ENCODE measurements at regions of chr2 and their contacts with region 1.

Region 1: GRCh38 chr2:42974721-42975717 is 182.6 kb upstream of the HAAO start:
- DNase-seq: peak; percentile 95 to 98
- H3K4me3 ChIP-seq: peak overlapping the region; percentile 7; the same call in 1 of the 2 replicates
- H3K4me3 Mint-ChIP-seq: peak overlapping the region; percentile 63
- H3K27ac Mint-ChIP-seq: peak overlapping the region; percentile 84
- H3K4me1 ChIP-seq: peaks cover 83% of the 10 kb centered on the region
- H3K4me1 Mint-ChIP-seq: peaks cover 73% of the 10 kb centered on the region
- H3K27me3 ChIP-seq: no peaks in the 10 kb centered on the region
- H3K27me3 Mint-ChIP-seq: no peaks in the 10 kb centered on the region
- CTCF ChIP-seq: peak; percentile 96 to 97

Region 2: GRCh38 chr2:42810121-42810970 is 164.7 kb before region 1 on chr2:
- CTCF ChIA-PET with region 1: interaction called, 10 read pairs
- POLR2A ChIA-PET with region 1: interaction called, 4 read pairs
- intact Hi-C with region 1: no loop called
- DNase-seq: peak; percentile 95 to 97
- H3K4me3 ChIP-seq: peak overlapping the region; percentile 80
- H3K4me3 Mint-ChIP-seq: peak overlapping the region; percentile 96
- H3K27ac Mint-ChIP-seq: peak overlapping the region; percentile 94
- H3K4me1 ChIP-seq: peaks cover 5% of the 10 kb centered on the region; the same call in 1 of the 2 replicates
- H3K4me1 Mint-ChIP-seq: peaks cover 14% of the 10 kb centered on the region
- H3K27me3 ChIP-seq: no peaks in the 10 kb centered on the region
- H3K27me3 Mint-ChIP-seq: no peaks in the 10 kb centered on the region
- CTCF ChIP-seq: peak in 1 of 2 experiments; percentile 3

Region 3: DNA sequence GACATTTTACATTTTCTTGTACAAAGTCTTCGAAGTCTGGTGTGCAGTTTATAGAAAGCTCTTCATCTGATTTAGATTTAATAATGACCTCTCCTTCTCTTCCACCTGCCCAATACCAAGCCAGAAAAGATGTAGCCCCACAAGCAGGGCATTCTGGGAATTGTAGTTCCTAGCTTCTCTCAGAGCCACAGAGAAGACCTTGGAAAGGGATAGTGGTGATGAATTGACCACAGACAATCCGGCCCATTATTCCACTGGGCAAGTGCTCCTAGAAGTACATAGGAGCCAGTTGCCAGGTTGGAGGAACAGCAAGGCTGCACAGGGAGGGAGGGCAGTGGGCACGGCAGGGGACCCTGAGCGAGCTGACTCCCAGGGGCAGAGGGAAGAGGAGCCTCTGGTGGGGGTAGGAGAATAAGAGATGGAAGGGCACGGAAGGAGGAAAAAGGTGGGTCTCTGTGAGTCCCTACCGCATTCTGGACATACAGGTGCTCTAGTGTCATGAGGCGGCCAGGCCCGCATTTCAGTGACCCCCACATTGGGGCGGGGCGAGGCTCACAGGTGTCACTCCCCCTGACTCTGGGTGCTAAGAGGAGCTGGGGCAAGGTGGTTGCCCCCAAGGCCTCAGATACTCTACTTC is 30.1 kb before region 1 on chr2:
- CTCF ChIA-PET with region 1: interaction called, 7 read pairs
- POLR2A ChIA-PET with region 1: interaction called, 3 read pairs
- intact Hi-C with region 1: loop called (anchors 1 kb)
- DNase-seq: no peak
- H3K4me3 ChIP-seq: no peak overlapping the region
- H3K4me3 Mint-ChIP-seq: no peak overlapping the region
- H3K27ac Mint-ChIP-seq: no peak overlapping the region
- H3K4me1 ChIP-seq: peaks cover 52% of the 10 kb centered on the region
- H3K4me1 Mint-ChIP-seq: peaks cover 36% of the 10 kb centered on the region
- H3K27me3 ChIP-seq: no peaks in the 10 kb centered on the region
- H3K27me3 Mint-ChIP-seq: no peaks in the 10 kb centered on the region
- CTCF ChIP-seq: no peak

Region 4: DNA sequence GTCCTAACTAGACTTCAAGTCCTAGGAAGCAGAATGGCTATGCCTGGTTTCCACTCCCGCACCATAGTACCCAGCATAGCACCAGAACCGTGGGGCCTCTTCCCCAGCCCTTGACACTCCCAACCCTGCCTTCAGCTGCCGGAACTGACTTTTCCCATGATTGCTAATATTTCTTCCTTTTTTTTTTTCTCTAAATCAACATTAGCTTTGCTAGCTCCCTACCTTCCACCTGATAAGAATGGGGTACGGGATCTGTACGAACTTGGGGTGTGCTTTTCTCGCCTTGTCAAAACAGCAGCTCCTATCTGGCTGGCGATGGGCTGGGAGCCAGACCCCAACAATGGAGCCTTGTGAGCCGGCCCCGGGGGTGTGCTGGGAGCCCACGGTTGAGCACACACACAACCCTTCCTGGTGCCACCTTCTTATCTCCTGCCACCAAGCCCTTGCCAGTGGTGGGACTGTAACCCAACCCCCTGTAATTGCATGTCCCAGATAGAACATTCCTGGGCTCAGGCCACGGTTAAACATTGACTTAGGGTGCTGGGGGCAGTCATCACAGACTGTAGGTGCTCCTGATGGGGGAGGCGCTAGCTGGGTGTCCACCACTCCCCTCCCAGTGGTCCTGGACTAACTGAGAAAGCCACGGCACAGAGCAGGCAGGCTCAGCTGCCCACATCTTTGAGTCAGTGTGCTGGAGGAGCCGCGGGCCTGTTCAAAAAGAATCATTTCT is 30.4 kb after region 1 on chr2:
- CTCF ChIA-PET with region 1: interaction called, 6 read pairs
- POLR2A ChIA-PET with region 1: interaction called, 7 read pairs
- intact Hi-C with region 1: loop called (anchors 1 kb)
- DNase-seq: peak; percentile 75 to 93
- H3K4me3 ChIP-seq: peak overlapping the region; percentile 15; the same call in 1 of the 2 replicates
- H3K4me3 Mint-ChIP-seq: peak overlapping the region; percentile 14
- H3K27ac Mint-ChIP-seq: peak overlapping the region; percentile 84
- H3K4me1 ChIP-seq: peaks cover 43% of the 10 kb centered on the region
- H3K4me1 Mint-ChIP-seq: peaks cover 40% of the 10 kb centered on the region
- H3K27me3 ChIP-seq: no peaks in the 10 kb centered on the region
- H3K27me3 Mint-ChIP-seq: no peaks in the 10 kb centered on the region
- CTCF ChIP-seq: no peak

Region 5: DNA sequence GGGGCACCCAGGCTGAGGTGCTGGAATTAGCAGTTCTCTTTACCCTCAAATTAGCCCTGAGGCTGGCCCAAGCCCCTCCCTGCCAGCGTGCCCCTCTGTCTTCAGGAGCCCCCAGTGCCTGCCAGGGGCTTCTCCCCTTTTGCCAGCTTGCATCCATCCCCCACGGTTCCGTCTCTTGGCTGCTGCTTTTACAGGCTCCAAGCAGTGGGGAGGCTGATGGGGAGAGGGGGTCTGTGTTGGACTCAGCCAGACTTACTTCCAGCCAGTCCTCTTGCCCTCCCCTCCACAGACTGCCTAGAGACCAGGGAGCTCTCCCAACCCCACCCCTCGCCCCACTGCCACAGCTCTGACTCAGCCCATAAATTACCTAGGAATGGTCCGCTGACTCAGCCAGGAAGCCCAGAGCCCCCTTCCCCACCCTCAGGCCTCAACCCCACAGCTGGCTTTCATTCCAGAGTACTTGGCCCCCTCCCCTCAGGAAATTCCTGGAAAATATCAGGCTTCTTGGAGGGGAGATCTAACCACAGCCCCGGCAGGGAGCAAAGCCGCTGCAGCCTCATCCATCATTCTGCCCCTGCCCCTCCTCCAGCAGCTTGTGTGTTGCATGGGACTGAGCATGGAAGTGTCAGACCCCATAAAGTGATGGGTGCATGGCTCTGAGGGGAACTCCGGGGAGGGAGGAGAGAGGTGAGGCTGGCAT is 66.8 kb after region 1 on chr2:
- CTCF ChIA-PET with region 1: interaction called, 4 read pairs
- POLR2A ChIA-PET with region 1: interaction called, 6 read pairs
- intact Hi-C with region 1: loop called (anchors 1 kb)
- DNase-seq: peak; percentile 79 to 93
- H3K4me3 ChIP-seq: no peak overlapping the region
- H3K4me3 Mint-ChIP-seq: peak overlapping the region; percentile 35
- H3K27ac Mint-ChIP-seq: peak overlapping the region; percentile 99
- H3K4me1 ChIP-seq: peaks cover 89% of the 10 kb centered on the region
- H3K4me1 Mint-ChIP-seq: peaks cover 48% of the 10 kb centered on the region
- H3K27me3 ChIP-seq: no peaks in the 10 kb centered on the region
- H3K27me3 Mint-ChIP-seq: no peaks in the 10 kb centered on the region
- CTCF ChIP-seq: no peak

Region 6: GRCh38 chr2:43194121-43194869 is 219.3 kb after region 1 on chr2:
- CTCF ChIA-PET with region 1: interaction called, 5 read pairs
- POLR2A ChIA-PET with region 1: interaction called, 7 read pairs
- intact Hi-C with region 1: loop called (anchors 1 kb)
- DNase-seq: peak; percentile 97 to 98
- H3K4me3 ChIP-seq: 0 out of 2 replicates have a peak overlapping the region, but pooled peaks have one; percentile 0
- H3K4me3 Mint-ChIP-seq: peak overlapping the region; percentile 67
- H3K27ac Mint-ChIP-seq: peak overlapping the region; percentile 91
- H3K4me1 ChIP-seq: peaks cover 86% of the 10 kb centered on the region
- H3K4me1 Mint-ChIP-seq: peaks cover 60% of the 10 kb centered on the region
- H3K27me3 ChIP-seq: no peaks in the 10 kb centered on the region
- H3K27me3 Mint-ChIP-seq: no peaks in the 10 kb centered on the region
- CTCF ChIP-seq: no peak

Region 7: GRCh38 chr2:43424262-43425207 is 449.5 kb after region 1 on chr2:
- CTCF ChIA-PET with region 1: no interaction called
- POLR2A ChIA-PET with region 1: no interaction called
- intact Hi-C with region 1: loop called (anchors 1 kb)
- DNase-seq: peak in 1 of 2 experiments; percentile 38
- H3K4me3 ChIP-seq: no peak overlapping the region
- H3K4me3 Mint-ChIP-seq: peak overlapping the region; percentile 39
- H3K27ac Mint-ChIP-seq: peak overlapping the region; percentile 66
- H3K4me1 ChIP-seq: peaks cover 80% of the 10 kb centered on the region
- H3K4me1 Mint-ChIP-seq: peaks cover 46% of the 10 kb centered on the region
- H3K27me3 ChIP-seq: no peaks in the 10 kb centered on the region
- H3K27me3 Mint-ChIP-seq: no peaks in the 10 kb centered on the region
- CTCF ChIP-seq: no peak

Region 8: GRCh38 chr2:43853141-43854081 is 878.4 kb after region 1 on chr2:
- CTCF ChIA-PET with region 1: no interaction called
- POLR2A ChIA-PET with region 1: no interaction called
- intact Hi-C with region 1: no loop called
- DNase-seq: no peak
- H3K4me3 ChIP-seq: no peak overlapping the region
- H3K4me3 Mint-ChIP-seq: no peak overlapping the region
- H3K27ac Mint-ChIP-seq: no peak overlapping the region
- H3K4me1 ChIP-seq: no peaks in the 10 kb centered on the region
- H3K4me1 Mint-ChIP-seq: no peaks in the 10 kb centered on the region
- H3K27me3 ChIP-seq: no peaks in the 10 kb centered on the region
- H3K27me3 Mint-ChIP-seq: peaks cover 32% of the 10 kb centered on the region
- CTCF ChIP-seq: no peak